MCF 10A (cell line): ENCODE measurements at regions of chr19 and their contacts with region 1.

Region 1: GRCh38 chr19:10864538-10864899 is 6.8 kb upstream of the CARM1 start:
- DNase-seq: peak; percentile 85
- H3K4me3 Mint-ChIP-seq: no peak overlapping the region
- H3K27ac Mint-ChIP-seq: peak overlapping the region; percentile 37
- H3K4me1 Mint-ChIP-seq: peaks cover 17% of the 10 kb centered on the region
- H3K27me3 Mint-ChIP-seq: no peaks in the 10 kb centered on the region
- CTCF ChIP-seq: peak; percentile 89

Region 2: DNA sequence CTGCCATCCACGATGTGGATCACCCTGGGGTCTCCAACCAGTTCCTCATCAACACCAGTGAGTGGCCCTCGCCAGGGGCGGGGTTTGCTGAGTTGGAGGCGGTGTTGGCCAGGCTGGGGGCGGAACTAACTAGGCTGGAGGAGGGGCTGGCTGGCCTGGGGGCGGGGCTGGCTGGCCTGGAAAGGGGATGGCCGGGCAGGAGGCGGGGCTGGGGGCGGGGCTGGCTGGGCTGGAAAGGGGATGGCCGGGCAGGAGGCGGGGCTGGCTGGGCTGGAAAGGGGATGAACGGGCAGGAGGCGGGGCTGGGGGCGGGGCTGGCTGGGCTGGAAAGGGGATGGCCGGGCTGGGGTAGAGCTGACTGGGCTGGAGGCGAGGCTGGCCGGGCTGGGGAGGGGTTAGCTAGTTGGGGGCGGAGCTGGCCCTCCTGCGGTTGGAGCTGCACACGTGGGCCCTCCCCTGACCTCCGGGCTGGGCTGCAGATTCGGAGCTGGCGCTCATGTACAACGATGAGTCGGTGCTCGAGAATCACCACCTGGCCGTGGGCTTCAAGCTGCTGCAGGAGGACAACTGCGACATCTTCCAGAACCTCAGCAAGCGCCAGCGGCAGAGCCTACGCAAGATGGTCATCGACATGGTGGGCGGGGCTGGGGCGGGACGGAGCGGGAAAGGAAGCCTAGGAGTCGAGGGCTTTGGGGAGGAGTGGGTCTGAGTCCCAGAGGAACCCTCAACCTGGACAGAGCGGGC is 403.3 kb before region 1 on chr19:
- CTCF ChIA-PET with region 1: no interaction called
- POLR2A ChIA-PET with region 1: no interaction called
- intact Hi-C with region 1: no loop called
- DNase-seq: peak; percentile 94
- H3K4me3 Mint-ChIP-seq: peak overlapping the region; percentile 59
- H3K27ac Mint-ChIP-seq: no peak overlapping the region
- H3K4me1 Mint-ChIP-seq: peaks cover 11% of the 10 kb centered on the region
- H3K27me3 Mint-ChIP-seq: no peaks in the 10 kb centered on the region
- CTCF ChIP-seq: no peak

Region 3: DNA sequence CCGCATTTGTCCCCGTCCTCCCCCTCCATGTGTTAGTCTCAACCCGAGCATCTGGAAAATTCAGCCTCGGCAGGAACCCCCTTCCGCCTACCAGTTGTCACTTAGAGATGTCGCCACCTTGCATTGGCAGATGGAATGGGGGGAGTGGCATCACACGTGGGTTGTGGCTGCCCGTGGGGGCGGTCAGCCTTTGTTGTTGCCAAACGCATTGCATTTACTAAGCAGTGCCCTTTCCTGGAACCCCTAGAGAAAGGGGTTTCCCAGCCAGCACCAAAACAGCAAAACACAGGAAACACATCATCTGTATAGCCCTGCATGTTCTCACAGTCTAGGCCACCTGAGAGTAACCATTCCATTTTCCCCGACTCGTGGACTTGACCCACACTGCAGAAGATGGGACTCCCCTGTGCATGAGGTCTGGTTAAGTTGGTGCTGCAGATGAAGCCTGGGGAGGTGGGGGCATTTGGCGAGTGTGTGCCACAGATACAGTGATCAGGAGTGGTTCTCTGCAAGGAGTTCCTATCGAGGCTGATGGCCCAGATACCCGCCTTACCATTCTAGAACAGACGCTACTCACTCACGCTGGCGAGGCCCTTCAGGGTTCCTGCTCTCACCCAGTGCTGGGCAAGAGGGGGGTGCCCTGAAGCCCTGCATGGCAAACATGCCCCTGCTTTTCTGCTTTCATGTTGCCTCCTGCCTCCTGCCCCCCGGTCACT is 66.8 kb before region 1 on chr19:
- CTCF ChIA-PET with region 1: no interaction called
- POLR2A ChIA-PET with region 1: no interaction called
- intact Hi-C with region 1: no loop called
- DNase-seq: no peak
- H3K4me3 Mint-ChIP-seq: no peak overlapping the region
- H3K27ac Mint-ChIP-seq: no peak overlapping the region
- H3K4me1 Mint-ChIP-seq: no peaks in the 10 kb centered on the region
- H3K27me3 Mint-ChIP-seq: no peaks in the 10 kb centered on the region
- CTCF ChIP-seq: no peak

Region 4: DNA sequence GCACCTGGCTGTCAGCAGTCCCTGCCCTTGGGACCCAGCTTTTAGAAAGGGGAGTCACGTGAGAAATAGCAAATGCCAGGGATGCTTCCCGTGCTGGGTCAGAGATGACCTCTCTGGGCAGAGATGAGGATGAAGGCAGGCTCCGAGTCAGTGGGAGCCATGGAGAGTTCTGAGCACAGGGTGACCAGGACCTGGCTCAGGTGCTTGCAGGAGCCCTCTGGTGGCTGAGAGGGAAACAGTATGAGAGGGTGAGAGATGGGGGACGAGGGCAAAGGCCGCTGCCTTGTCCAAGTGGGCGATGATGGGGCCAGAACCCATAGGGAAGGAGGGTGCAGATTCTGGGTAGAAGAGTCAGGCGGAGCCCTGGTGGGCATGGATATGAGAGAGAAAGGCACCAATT is 44.3 kb before region 1 on chr19:
- CTCF ChIA-PET with region 1: interaction called, 17 read pairs
- POLR2A ChIA-PET with region 1: no interaction called
- intact Hi-C with region 1: no loop called
- DNase-seq: no peak
- H3K4me3 Mint-ChIP-seq: no peak overlapping the region
- H3K27ac Mint-ChIP-seq: peak overlapping the region; percentile 57
- H3K4me1 Mint-ChIP-seq: no peaks in the 10 kb centered on the region
- H3K27me3 Mint-ChIP-seq: no peaks in the 10 kb centered on the region
- CTCF ChIP-seq: no peak

Region 5: GRCh38 chr19:10846500-10847202 is 17.9 kb before region 1 on chr19:
- CTCF ChIA-PET with region 1: interaction called, 68 read pairs
- POLR2A ChIA-PET with region 1: no interaction called
- intact Hi-C with region 1: no loop called
- DNase-seq: no peak
- H3K4me3 Mint-ChIP-seq: no peak overlapping the region
- H3K27ac Mint-ChIP-seq: no peak overlapping the region
- H3K4me1 Mint-ChIP-seq: no peaks in the 10 kb centered on the region
- H3K27me3 Mint-ChIP-seq: no peaks in the 10 kb centered on the region
- CTCF ChIP-seq: no peak